PC-9 (cell line): ENCODE measurements at regions of chrX and their contacts with region 1.

Region 1: GRCh38 chrX:103533511-103534216 is 14.4 kb upstream of the RAB40A start:
- DNase-seq: peak in 1 of 2 experiments; percentile 64
- H3K4me3 ChIP-seq: no peak overlapping the region
- H3K27ac ChIP-seq: no peak overlapping the region
- H3K4me1 ChIP-seq: 0 out of 2 replicates have a peak, but pooled peaks cover 5% of the 10 kb centered on the region
- H3K27me3 ChIP-seq: no peaks in the 10 kb centered on the region
- CTCF ChIP-seq: peak; percentile 89

Region 2: GRCh38 chrX:103464774-103465117 is 68.9 kb before region 1 on chrX:
- CTCF ChIA-PET with region 1: no interaction called
- POLR2A ChIA-PET with region 1: no interaction called
- intact Hi-C with region 1: no loop called
- DNase-seq: peak in 1 of 2 experiments; percentile 61
- H3K4me3 ChIP-seq: no peak overlapping the region
- H3K27ac ChIP-seq: no peak overlapping the region
- H3K4me1 ChIP-seq: no peaks in the 10 kb centered on the region
- H3K27me3 ChIP-seq: no peaks in the 10 kb centered on the region
- CTCF ChIP-seq: peak; percentile 81

Region 3: DNA sequence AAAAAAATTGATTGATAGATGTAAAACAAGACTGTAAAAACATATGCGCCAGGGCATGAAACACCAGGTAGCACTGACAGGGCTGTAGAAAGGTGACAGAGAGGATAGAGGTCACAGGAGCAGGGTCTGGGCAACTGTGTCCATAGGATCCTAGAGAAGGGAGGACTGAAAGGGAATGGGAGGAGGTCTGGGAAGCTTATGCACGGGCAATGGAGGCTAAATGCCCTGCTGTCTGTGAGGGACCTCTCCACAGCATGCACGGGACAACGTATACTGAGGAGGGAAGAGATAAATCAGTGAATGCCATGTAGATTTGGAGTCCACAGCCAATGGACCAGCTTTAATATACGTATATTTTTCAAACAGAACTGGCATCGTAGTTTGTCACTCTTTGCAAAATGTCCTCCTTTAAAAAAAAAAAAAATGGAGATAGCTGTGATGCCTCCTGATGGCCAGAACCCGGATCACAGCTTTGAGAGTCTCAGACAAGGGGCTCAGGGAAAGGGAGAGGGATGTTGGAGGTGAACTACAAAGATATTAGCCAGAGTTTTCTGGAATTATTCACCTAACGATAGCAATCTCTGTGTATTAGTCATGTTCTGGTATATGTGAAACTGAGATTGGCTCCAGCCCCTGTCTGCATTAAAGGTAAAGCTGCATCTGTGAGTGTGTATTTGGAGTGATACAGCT is 30.4 kb before region 1 on chrX:
- CTCF ChIA-PET with region 1: no interaction called
- POLR2A ChIA-PET with region 1: no interaction called
- intact Hi-C with region 1: no loop called
- DNase-seq: no peak
- H3K4me3 ChIP-seq: no peak overlapping the region
- H3K27ac ChIP-seq: no peak overlapping the region
- H3K4me1 ChIP-seq: no peaks in the 10 kb centered on the region
- H3K27me3 ChIP-seq: no peaks in the 10 kb centered on the region
- CTCF ChIP-seq: no peak

Region 4: DNA sequence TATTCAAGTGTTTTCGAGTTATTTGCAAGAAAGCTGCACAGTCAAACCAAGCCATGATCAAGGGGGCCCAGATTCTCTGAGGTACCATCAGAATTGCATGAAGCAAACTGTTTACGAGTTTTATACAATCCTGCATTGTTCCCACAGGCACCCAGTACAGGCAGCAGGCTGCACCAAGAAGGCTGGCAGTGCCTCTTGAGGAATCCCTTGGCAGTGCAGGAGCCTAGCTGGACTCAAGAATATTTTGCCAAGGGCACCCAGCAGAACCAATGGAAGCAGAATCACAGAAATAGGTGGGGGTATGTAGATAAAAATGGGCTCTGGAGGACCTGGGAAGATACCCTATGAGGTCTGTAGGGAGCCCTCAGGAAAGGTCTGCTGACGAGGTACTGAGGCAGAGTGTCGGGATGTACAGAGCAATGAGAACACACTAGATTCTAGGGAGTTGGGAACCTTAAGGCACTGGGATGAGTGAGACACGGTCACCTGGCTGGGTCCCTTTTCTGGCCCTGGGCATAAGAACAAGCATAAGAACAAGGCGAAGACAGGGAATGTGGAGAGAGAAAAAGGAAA is 240.5 kb after region 1 on chrX:
- CTCF ChIA-PET with region 1: interaction called, 3 read pairs
- POLR2A ChIA-PET with region 1: no interaction called
- intact Hi-C with region 1: loop called (anchors 1 kb)
- DNase-seq: no peak
- H3K4me3 ChIP-seq: no peak overlapping the region
- H3K27ac ChIP-seq: no peak overlapping the region
- H3K4me1 ChIP-seq: no peaks in the 10 kb centered on the region
- H3K27me3 ChIP-seq: peaks cover 35% of the 10 kb centered on the region
- CTCF ChIP-seq: peak; percentile 64

Region 5: DNA sequence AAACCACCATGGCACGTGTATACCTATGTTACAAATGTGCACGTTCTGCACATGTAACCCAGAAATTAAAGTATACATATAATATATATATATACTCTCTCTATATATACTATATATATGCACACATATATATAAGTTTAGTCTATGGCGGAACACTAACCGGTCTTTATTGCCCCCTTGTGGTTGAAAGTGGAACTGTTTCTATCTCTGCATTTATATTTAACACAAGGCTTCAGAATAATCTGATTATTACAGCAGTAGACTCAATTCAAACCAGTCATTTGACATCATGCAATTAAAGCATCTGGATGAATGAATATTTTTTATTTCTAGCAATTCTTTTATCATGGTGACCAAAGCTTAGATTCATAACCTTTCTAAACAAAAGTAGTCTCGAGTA is 283.8 kb after region 1 on chrX:
- CTCF ChIA-PET with region 1: no interaction called
- POLR2A ChIA-PET with region 1: no interaction called
- intact Hi-C with region 1: loop called (anchors 1 kb)
- DNase-seq: peak; percentile 12 to 51
- H3K4me3 ChIP-seq: no peak overlapping the region
- H3K27ac ChIP-seq: no peak overlapping the region
- H3K4me1 ChIP-seq: no peaks in the 10 kb centered on the region
- H3K27me3 ChIP-seq: no peaks in the 10 kb centered on the region
- CTCF ChIP-seq: peak; percentile 76

Region 6: DNA sequence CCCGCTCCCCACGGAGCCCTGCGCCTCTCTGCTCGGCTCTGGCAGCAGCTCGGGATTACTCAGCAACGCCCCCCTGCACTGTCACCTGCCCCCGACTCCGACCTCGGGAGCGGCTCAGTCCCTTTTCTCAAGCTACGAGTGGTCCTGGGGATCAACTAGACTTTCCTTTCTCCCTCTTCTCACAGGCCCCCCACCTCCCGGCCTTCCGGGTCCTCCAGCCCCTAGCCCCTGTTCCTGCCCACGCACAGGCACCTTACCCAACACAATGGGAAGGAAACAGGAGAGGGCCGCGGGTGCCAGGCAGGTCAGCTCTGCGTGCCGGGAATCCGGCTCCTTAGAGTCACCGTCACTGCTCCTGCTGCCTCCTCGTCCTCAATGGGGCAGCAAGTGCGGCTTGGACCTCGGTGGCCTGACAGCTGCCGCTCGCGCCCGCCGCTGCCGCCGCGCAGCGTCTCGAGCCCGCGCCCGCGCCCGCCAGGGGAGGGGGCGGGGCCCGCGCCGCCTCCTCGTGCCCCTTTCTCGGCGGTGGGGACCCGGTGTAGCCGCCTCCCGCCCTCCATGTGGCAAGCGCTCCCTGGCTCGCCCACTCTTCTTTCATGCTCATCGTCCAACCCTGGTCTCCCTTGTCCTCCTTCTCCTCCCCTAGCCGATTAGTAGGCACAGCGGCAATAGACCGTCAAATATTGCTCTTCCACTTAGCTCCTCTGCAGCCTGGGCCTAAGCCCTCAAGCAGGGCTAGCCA is 298.3 kb after region 1 on chrX and contains the start of gene RAB9B:
- CTCF ChIA-PET with region 1: interaction called, 11 read pairs
- POLR2A ChIA-PET with region 1: no interaction called
- intact Hi-C with region 1: no loop called
- DNase-seq: no peak
- H3K4me3 ChIP-seq: no peak within 1 kb of the TSS
- H3K27ac ChIP-seq: no peak within 1 kb of the TSS
- H3K4me1 ChIP-seq: no peaks in the 10 kb centered on the region
- H3K27me3 ChIP-seq: peaks cover 24% of the 10 kb centered on the region
- CTCF ChIP-seq: no peak
- total RNA-seq, gene RAB9B: not detected in 2 replicates

Region 7: DNA sequence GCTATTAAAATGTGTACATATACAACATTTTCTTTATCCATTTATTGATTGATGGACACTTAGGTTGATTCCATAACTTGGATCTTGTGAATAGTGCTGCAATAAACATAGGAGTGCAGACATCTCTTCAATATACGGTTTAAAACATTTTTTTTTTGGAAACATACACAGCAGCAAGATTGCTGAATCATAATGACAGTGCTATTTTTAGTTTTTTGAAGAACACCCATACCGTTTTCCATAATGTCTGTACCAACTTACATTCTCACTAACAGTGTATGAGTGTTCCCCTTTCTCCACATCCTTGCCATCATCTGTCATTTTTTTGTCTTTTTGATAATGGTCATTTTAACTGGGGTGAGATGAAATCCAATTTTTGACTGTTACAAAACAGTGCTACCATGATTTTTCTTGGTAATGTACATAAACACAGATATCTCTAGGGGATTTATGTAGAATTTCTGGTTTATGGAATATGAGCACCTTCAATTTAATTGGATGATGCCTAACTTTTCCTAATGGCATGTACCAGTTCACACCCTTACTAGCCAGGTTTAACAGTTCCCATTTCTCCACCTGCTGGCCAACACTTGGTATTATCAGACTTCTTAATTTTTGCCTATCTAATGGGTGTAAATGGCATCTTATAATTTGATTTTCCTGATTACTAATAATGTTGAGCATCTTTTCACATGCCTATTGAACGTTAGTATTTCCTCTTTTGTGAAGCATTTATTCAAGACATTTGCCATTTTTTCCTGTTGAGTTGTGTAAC is 407.7 kb after region 1 on chrX:
- CTCF ChIA-PET with region 1: no interaction called
- POLR2A ChIA-PET with region 1: no interaction called
- intact Hi-C with region 1: loop called (anchors 1 kb)
- DNase-seq: no peak
- H3K4me3 ChIP-seq: no peak overlapping the region
- H3K27ac ChIP-seq: no peak overlapping the region
- H3K4me1 ChIP-seq: no peaks in the 10 kb centered on the region
- H3K27me3 ChIP-seq: peaks cover 10% of the 10 kb centered on the region; the same call in 1 of the 2 replicates
- CTCF ChIP-seq: peak; percentile 59

Region 8: DNA sequence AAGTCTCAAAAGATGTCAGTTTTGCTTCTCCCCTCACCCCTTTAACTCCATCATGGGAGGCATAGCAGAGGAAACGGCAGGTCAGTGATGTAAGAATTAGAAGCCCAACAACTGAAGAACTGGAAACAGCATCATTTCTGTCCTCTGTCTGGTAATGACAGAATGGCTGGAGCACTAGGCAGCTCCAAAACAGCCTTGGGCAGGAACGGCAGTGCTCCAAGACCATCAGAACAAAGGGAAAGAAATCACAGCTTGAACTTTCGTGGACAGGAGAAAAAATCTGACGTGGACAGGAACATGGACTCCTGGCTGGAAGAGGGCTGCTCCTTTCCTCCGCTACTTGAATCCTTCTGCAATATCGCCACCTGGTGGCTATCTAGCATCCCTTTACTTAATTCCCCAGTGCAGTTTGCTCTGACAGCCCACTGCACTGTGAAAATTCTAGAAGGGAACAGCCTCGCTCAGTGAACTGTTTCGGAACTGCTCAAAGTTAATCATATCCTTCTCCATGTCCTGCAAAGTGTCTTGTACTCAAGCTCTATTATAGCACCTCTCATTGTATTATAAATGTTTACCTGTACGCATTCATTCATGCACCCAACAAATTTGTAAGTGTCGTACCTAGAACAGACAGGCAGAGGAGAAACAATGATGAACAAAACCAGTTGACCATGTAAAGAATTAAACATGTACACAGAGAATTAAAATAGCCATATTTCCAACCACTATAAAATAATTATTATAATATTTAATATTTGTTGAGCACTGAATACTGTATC is 602.8 kb after region 1 on chrX:
- CTCF ChIA-PET with region 1: no interaction called
- POLR2A ChIA-PET with region 1: no interaction called
- intact Hi-C with region 1: loop called (anchors 1 kb)
- DNase-seq: peak; percentile 33 to 45
- H3K4me3 ChIP-seq: no peak overlapping the region
- H3K27ac ChIP-seq: no peak overlapping the region
- H3K4me1 ChIP-seq: no peaks in the 10 kb centered on the region
- H3K27me3 ChIP-seq: no peaks in the 10 kb centered on the region
- CTCF ChIP-seq: peak; percentile 80